ENCODE measurements at regions of chr12 and their contacts with region 1.

Region 1: GRCh38 chr12:52278541-52279421 is 4.3 kb downstream of the KRT86 start:
- DNase-seq: peak; percentile 65
- ATAC-seq: peak; percentile 88
- H3K4me3 ChIP-seq: no peak overlapping the region
- H3K27ac ChIP-seq: peak overlapping the region; percentile 91
- H3K4me1 ChIP-seq: peaks cover 24% of the 10 kb centered on the region
- H3K27me3 ChIP-seq: peaks cover 2% of the 10 kb centered on the region; the same call in 1 of the 2 replicates
- CTCF ChIP-seq: peak; percentile 97
- POLR2A ChIP-seq: 0 out of 2 replicates have a peak, but pooled peaks have one; percentile 35
- RAD21 ChIP-seq: peak; percentile 88

Region 2: GRCh38 chr12:52197371-52198231 is 81.2 kb before region 1 on chr12:
- CTCF ChIA-PET with region 1: no interaction called
- POLR2A ChIA-PET with region 1: no interaction called
- dilution Hi-C with region 1: no loop called
- in situ Hi-C with region 1: no loop called
- intact Hi-C with region 1: no loop called
- DNase-seq: no peak
- ATAC-seq: no peak
- H3K4me3 ChIP-seq: no peak overlapping the region
- H3K27ac ChIP-seq: no peak overlapping the region
- H3K4me1 ChIP-seq: peaks cover 33% of the 10 kb centered on the region
- H3K27me3 ChIP-seq: no peaks in the 10 kb centered on the region
- CTCF ChIP-seq: no peak
- POLR2A ChIP-seq: no peak
- RAD21 ChIP-seq: no peak

Region 3: GRCh38 chr12:52213512-52214420 is 65.0 kb before region 1 on chr12:
- CTCF ChIA-PET with region 1: interaction called, 4 read pairs
- POLR2A ChIA-PET with region 1: no interaction called
- dilution Hi-C with region 1: no loop called
- in situ Hi-C with region 1: no loop called
- intact Hi-C with region 1: loop called (anchors 2 kb)
- DNase-seq: peak; percentile 78
- ATAC-seq: peak; percentile 98
- H3K4me3 ChIP-seq: no peak overlapping the region
- H3K27ac ChIP-seq: no peak overlapping the region
- H3K4me1 ChIP-seq: peaks cover 9% of the 10 kb centered on the region
- H3K27me3 ChIP-seq: no peaks in the 10 kb centered on the region
- CTCF ChIP-seq: peak; percentile 100
- POLR2A ChIP-seq: no peak
- RAD21 ChIP-seq: peak; percentile 100

Region 4: GRCh38 chr12:52230327-52231291 is 48.2 kb before region 1 on chr12:
- CTCF ChIA-PET with region 1: interaction called, 3 read pairs
- POLR2A ChIA-PET with region 1: no interaction called
- dilution Hi-C with region 1: no loop called
- in situ Hi-C with region 1: no loop called
- intact Hi-C with region 1: loop called (anchors 5 kb)
- DNase-seq: peak; percentile 68
- ATAC-seq: peak; percentile 83
- H3K4me3 ChIP-seq: no peak overlapping the region
- H3K27ac ChIP-seq: peak overlapping the region; percentile 90
- H3K4me1 ChIP-seq: peaks cover 23% of the 10 kb centered on the region
- H3K27me3 ChIP-seq: no peaks in the 10 kb centered on the region
- CTCF ChIP-seq: no peak
- POLR2A ChIP-seq: no peak
- RAD21 ChIP-seq: 0 out of 2 replicates have a peak, but pooled peaks have one; percentile 13

Region 5: GRCh38 chr12:52268212-52268611 is 10.6 kb before region 1 on chr12:
- CTCF ChIA-PET with region 1: interaction called, 14 read pairs
- POLR2A ChIA-PET with region 1: no interaction called
- dilution Hi-C with region 1: no loop called
- in situ Hi-C with region 1: no loop called
- intact Hi-C with region 1: no loop called
- DNase-seq: no peak
- ATAC-seq: peak; percentile 32; the same call in 1 of the 2 replicates
- H3K4me3 ChIP-seq: no peak overlapping the region
- H3K27ac ChIP-seq: no peak overlapping the region
- H3K4me1 ChIP-seq: peaks cover 2% of the 10 kb centered on the region
- H3K27me3 ChIP-seq: peaks cover 13% of the 10 kb centered on the region
- CTCF ChIP-seq: no peak
- POLR2A ChIP-seq: no peak
- RAD21 ChIP-seq: no peak

Region 6: DNA sequence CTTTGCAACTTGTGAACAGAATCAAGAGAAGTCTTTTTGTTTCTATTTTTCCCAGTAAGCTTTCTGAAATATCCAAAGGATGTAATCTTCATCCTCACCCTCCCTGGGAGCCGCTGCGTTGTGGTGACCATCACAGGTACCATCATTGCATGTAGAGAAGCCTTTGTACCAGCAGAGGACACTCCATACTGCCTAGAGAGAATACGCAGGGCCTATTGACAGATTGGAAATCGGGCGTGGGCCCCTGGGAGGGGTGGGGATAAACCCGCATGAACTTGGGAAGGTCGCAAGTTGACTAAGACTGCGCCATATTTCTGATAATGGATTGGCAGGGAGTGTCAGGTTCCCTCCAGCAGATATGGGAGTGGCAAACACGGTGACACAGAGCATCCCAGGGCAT is 388.7 kb after region 1 on chr12:
- CTCF ChIA-PET with region 1: no interaction called
- POLR2A ChIA-PET with region 1: no interaction called
- dilution Hi-C with region 1: no loop called
- in situ Hi-C with region 1: no loop called
- intact Hi-C with region 1: no loop called
- DNase-seq: no peak
- ATAC-seq: no peak
- H3K4me3 ChIP-seq: no peak overlapping the region
- H3K27ac ChIP-seq: no peak overlapping the region
- H3K4me1 ChIP-seq: no peaks in the 10 kb centered on the region
- H3K27me3 ChIP-seq: peaks cover 13% of the 10 kb centered on the region
- CTCF ChIP-seq: peak; percentile 17; the same call in 1 of the 2 replicates
- POLR2A ChIP-seq: no peak
- RAD21 ChIP-seq: peak; percentile 23; the same call in 1 of the 2 replicates

Region 7: GRCh38 chr12:52879394-52880351 is 600.9 kb after region 1 on chr12:
- CTCF ChIA-PET with region 1: no interaction called
- POLR2A ChIA-PET with region 1: no interaction called
- dilution Hi-C with region 1: no loop called
- in situ Hi-C with region 1: no loop called
- intact Hi-C with region 1: loop called (anchors 10 kb)
- DNase-seq: peak; percentile 86
- ATAC-seq: peak; percentile 94
- H3K4me3 ChIP-seq: no peak overlapping the region
- H3K27ac ChIP-seq: no peak overlapping the region
- H3K4me1 ChIP-seq: peaks cover 3% of the 10 kb centered on the region
- H3K27me3 ChIP-seq: no peaks in the 10 kb centered on the region
- CTCF ChIP-seq: peak; percentile 98
- POLR2A ChIP-seq: peak; percentile 52
- RAD21 ChIP-seq: peak; percentile 97

Measured in IMR-90 (cell line).